Naive thymus-derived CD4-positive, alpha-beta T cell (primary cell): ENCODE measurements at regions of chr2 and their contacts with region 1.

Region 1: GRCh38 chr2:9984217-9984739 is 32.8 kb downstream of the GRHL1 start:
- DNase-seq: peak in 6 of 9 donors; percentile 18 to 63 (median 52)
- ATAC-seq: peak; percentile 94
- H3K4me3 ChIP-seq: no peak overlapping the region
- H3K4me3 Mint-ChIP-seq: no peak overlapping the region
- H3K27ac ChIP-seq: no peak overlapping the region
- H3K27ac Mint-ChIP-seq: peak overlapping the region in 1 of 9 donors; percentile 55
- H3K4me1 ChIP-seq: no peaks in the 10 kb centered on the region
- H3K4me1 Mint-ChIP-seq: peaks cover 9 to 18% (median 14%) of the 10 kb centered on the region in 7 donors
- H3K27me3 ChIP-seq: no peaks in the 10 kb centered on the region
- H3K27me3 Mint-ChIP-seq: peaks cover 0 to 21% (median 5%) of the 10 kb centered on the region in 5 donors

Region 2: GRCh38 chr2:9905379-9905778 is 78.9 kb before region 1 on chr2:
- CTCF ChIA-PET with region 1: no interaction called
- POLR2A ChIA-PET with region 1: no interaction called
- intact Hi-C with region 1: no loop called
- DNase-seq: no peak
- ATAC-seq: no peak
- H3K4me3 ChIP-seq: no peak overlapping the region
- H3K4me3 Mint-ChIP-seq: no peak overlapping the region
- H3K27ac ChIP-seq: no peak overlapping the region
- H3K27ac Mint-ChIP-seq: no peak overlapping the region
- H3K4me1 ChIP-seq: no peaks in the 10 kb centered on the region
- H3K4me1 Mint-ChIP-seq: peaks cover 0 to 5% (median 0%) of the 10 kb centered on the region in 7 donors
- H3K27me3 ChIP-seq: no peaks in the 10 kb centered on the region
- H3K27me3 Mint-ChIP-seq: no peaks in the 10 kb centered on the region

Region 3: GRCh38 chr2:9951272-9951972 is 32.9 kb before region 1 on chr2 and contains the start of gene GRHL1:
- CTCF ChIA-PET with region 1: interaction called, 5 read pairs
- POLR2A ChIA-PET with region 1: no interaction called
- intact Hi-C with region 1: loop called in 1 of 2 experiments (anchors 2 kb)
- DNase-seq: peak; percentile 82 to 95 (median 90)
- ATAC-seq: peak; percentile 97
- H3K4me3 ChIP-seq: peak within 1 kb of the TSS; percentile 57
- H3K4me3 Mint-ChIP-seq: peak within 1 kb of the TSS; percentile 70 to 90 (median 86)
- H3K27ac ChIP-seq: peak within 1 kb of the TSS; percentile 63
- H3K27ac Mint-ChIP-seq: peak within 1 kb of the TSS in 7 of 9 donors; percentile 15 to 77 (median 56)
- H3K4me1 ChIP-seq: no peaks in the 10 kb centered on the region
- H3K4me1 Mint-ChIP-seq: peaks cover 0 to 13% (median 8%) of the 10 kb centered on the region in 7 donors
- H3K27me3 ChIP-seq: no peaks in the 10 kb centered on the region
- H3K27me3 Mint-ChIP-seq: peaks cover 19 to 77% (median 39%) of the 10 kb centered on the region in 5 donors
- total RNA-seq, gene GRHL1: 0.19 to 1.3 (median 0.56) TPM

Region 4: DNA sequence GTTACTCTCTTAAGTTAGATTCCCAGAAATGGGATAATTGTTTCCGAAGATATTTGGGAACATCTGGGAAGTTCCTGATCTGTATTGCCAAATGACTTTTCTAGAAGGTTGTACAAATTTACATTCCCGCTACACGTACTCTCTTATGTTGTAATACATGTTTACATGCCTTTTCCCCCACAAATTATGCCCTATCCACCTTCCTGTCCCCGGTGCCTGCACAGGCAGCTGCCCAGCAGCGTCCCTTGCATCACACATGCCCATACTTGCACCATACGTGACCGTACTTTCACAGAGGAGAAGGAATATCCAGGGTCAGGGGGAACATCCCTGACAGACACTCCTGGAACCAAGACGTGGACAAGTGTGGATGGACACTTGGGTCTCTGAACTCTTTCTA is 34.9 kb after region 1 on chr2:
- CTCF ChIA-PET with region 1: no interaction called
- POLR2A ChIA-PET with region 1: no interaction called
- intact Hi-C with region 1: no loop called
- DNase-seq: no peak
- ATAC-seq: no peak
- H3K4me3 ChIP-seq: no peak overlapping the region
- H3K4me3 Mint-ChIP-seq: no peak overlapping the region
- H3K27ac ChIP-seq: no peak overlapping the region
- H3K27ac Mint-ChIP-seq: no peak overlapping the region
- H3K4me1 ChIP-seq: no peaks in the 10 kb centered on the region
- H3K4me1 Mint-ChIP-seq: peaks cover 0 to 2% (median 0%) of the 10 kb centered on the region in 7 donors
- H3K27me3 ChIP-seq: no peaks in the 10 kb centered on the region
- H3K27me3 Mint-ChIP-seq: peaks cover 0 to 21% (median 0%) of the 10 kb centered on the region in 5 donors

Region 5: DNA sequence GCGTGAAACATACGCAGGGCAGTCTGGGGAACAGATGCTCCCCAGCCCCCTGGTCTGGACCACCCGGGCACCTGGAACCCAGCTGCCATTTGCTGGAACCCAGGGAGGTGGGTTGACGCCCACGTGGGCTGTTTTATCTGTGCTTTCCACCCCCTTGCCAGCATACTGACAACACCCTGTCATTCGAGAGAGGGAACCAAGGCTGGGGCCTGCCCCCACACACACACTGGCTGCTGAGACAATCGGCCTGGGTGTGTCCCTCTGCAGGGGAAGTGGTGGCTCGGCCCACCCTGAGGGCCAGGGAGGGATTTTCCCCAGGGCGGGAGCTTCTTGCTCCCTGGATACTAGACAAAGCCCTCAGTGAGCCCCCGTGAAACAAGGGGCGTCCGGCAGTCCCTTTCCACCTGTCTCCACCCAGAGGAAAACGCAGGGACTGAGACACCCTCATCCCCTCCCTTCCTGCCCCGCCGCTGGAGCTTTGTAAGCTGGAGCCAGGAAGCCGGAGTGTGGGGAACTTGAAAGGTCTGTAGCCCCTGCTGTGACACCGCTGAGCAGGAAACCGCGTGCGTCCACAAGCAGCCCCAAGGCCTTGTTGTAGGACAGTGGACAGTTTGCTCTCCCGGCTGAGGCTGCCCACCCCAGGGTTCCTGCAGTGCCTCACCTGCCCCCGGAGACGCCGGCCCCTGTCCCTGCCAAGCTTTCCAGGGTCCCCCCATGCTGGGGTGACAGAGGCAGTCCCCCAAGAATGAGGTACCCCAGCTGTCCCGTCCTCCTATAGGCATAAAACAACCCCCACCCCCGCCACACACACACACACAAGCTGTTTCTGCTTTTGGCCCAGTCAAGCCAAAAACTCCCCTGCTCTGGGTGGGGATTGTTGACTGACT is 45.0 kb after region 1 on chr2:
- CTCF ChIA-PET with region 1: interaction called, 11 read pairs
- POLR2A ChIA-PET with region 1: no interaction called
- intact Hi-C with region 1: no loop called
- DNase-seq: peak in 8 of 9 donors; percentile 26 to 58 (median 36)
- ATAC-seq: peak; percentile 96
- H3K4me3 ChIP-seq: peak overlapping the region; percentile 31
- H3K4me3 Mint-ChIP-seq: peak overlapping the region; percentile 16 to 73 (median 66)
- H3K27ac ChIP-seq: peak overlapping the region; percentile 4
- H3K27ac Mint-ChIP-seq: peak overlapping the region in 7 of 9 donors; percentile 28 to 86 (median 71)
- H3K4me1 ChIP-seq: peaks cover 21 to 23% of the 10 kb centered on the region in 2 donors
- H3K4me1 Mint-ChIP-seq: peaks cover 16 to 28% (median 21%) of the 10 kb centered on the region in 7 donors
- H3K27me3 ChIP-seq: no peaks in the 10 kb centered on the region
- H3K27me3 Mint-ChIP-seq: peaks cover 0 to 3% (median 0%) of the 10 kb centered on the region in 5 donors

Region 6: GRCh38 chr2:10668402-10669012 is 684.2 kb after region 1 on chr2:
- CTCF ChIA-PET with region 1: no interaction called
- POLR2A ChIA-PET with region 1: interaction called, 6 read pairs
- intact Hi-C with region 1: loop called in 1 of 2 experiments (anchors 5 kb)
- DNase-seq: peak in 7 of 9 donors; percentile 39 to 63 (median 56)
- ATAC-seq: peak; percentile 71
- H3K4me3 ChIP-seq: no peak overlapping the region
- H3K4me3 Mint-ChIP-seq: no peak overlapping the region
- H3K27ac ChIP-seq: no peak overlapping the region
- H3K27ac Mint-ChIP-seq: no peak overlapping the region
- H3K4me1 ChIP-seq: no peaks in the 10 kb centered on the region
- H3K4me1 Mint-ChIP-seq: peaks cover 0 to 6% (median 0%) of the 10 kb centered on the region in 7 donors
- H3K27me3 ChIP-seq: no peaks in the 10 kb centered on the region
- H3K27me3 Mint-ChIP-seq: no peaks in the 10 kb centered on the region